Ascending aorta (tissue), 2 donors: ENCODE measurements at regions of chr10 and their contacts with region 1.

Region 1: GRCh38 chr10:86710987-86711512 is 42.7 kb downstream of the LDB3 start:
- DNase-seq: peak; percentile 58 to 94
- H3K4me3 ChIP-seq: peak overlapping the region; percentile 83 to 89
- H3K27ac ChIP-seq: peak overlapping the region; percentile 98
- H3K4me1 ChIP-seq: peaks cover 2 to 8% of the 10 kb centered on the region in 2 donors
- H3K27me3 ChIP-seq: no peaks in the 10 kb centered on the region
- CTCF ChIP-seq: peak; percentile 79 to 98 (median 89)

Region 2: GRCh38 chr10:86661161-86662025 is 49.7 kb before region 1 on chr10:
- intact Hi-C with region 1: no loop called
- DNase-seq: no peak
- H3K4me3 ChIP-seq: no peak overlapping the region
- H3K27ac ChIP-seq: no peak overlapping the region
- H3K4me1 ChIP-seq: peaks cover 0 to 3% of the 10 kb centered on the region in 2 donors
- H3K27me3 ChIP-seq: no peaks in the 10 kb centered on the region
- CTCF ChIP-seq: no peak

Region 3: DNA sequence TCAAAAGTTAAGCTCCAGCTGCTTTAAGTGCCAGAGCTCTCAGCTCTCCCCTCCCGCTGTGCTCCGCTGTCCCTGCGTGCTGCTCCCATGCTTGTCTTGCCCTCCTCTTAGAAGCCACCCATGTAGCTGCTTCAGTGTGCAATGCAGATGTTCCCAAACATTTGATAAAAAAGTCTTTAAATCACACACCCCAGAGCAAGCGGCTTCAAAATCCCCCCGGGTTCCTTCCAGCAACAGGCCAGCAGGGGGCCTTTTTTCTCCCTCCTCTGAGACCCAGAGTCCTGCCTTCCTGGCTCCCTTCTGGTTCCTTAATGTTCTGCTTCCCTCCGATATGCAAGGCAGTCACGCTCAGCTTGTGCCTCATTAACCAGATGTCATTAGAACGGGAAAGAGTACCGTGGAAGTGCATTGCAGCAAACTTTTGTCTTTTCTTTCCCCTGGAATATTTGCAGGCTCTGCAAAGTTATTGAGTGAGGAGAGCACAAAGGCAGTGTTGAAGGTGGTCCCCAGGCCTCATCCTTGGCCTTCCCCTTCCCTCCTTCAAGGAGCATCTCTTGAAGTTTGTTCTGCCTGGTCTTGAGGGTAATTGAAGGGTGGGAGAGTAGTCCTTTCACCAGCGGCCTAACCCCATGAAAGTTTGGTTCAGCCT is 17.2 kb before region 1 on chr10:
- intact Hi-C with region 1: loop called (anchors 2 kb)
- DNase-seq: no peak
- H3K4me3 ChIP-seq: no peak overlapping the region
- H3K27ac ChIP-seq: peak overlapping the region in 1 of 2 donors; percentile 36
- H3K4me1 ChIP-seq: peaks cover 7 to 15% of the 10 kb centered on the region in 2 donors
- H3K27me3 ChIP-seq: no peaks in the 10 kb centered on the region
- CTCF ChIP-seq: peak; percentile 35 to 54 (median 51)

Region 4: GRCh38 chr10:86899670-86900276 is 188.7 kb after region 1 on chr10:
- intact Hi-C with region 1: loop called (anchors 1 kb)
- DNase-seq: peak in 1 of 2 donors; percentile 81
- H3K4me3 ChIP-seq: no peak overlapping the region
- H3K27ac ChIP-seq: peak overlapping the region in 1 of 2 donors; percentile 15
- H3K4me1 ChIP-seq: peaks cover 0 to 17% of the 10 kb centered on the region in 2 donors
- H3K27me3 ChIP-seq: no peaks in the 10 kb centered on the region
- CTCF ChIP-seq: peak; percentile 64 to 73 (median 69)

Region 5: DNA sequence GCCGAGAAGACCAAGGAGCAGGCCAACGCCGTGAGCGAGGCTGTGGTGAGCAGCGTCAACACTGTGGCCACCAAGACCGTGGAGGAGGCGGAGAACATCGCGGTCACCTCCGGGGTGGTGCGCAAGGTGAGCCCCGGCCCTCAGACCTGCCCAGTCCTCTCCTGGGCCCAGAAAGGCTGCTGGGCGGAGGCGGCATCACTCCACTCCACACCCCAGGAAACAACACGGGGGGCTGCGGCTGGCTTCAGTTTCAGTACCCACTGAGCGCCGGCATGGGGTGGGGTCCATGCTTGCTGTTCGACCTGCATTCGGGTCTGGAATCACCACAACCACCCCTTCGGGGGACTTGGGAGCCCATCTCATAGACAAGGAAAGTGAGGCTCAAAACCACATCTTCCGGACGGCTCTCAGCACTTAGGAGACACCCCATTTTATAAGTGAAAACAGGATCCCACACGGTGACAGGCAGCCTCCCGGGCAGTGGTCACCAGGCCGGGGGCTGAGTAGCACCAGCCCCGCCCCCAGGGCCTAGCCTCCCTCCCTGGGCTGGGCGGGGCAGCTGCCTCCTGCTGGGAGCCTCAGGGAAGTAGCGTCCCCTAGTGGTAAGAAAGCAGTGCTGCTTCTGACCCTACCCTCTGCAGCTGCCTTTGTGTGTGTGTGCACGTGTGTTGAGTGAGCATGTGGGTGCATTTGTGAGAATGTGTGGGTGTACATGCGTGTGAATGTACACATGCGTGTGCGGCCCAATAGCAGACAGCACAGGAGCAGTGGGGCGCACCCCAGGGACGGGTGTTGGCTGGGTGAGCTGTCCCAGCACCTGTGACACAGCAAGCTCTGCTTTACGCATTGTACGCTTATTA is 249.2 kb after region 1 on chr10:
- intact Hi-C with region 1: loop called (anchors 5 kb)
- DNase-seq: peak in 1 of 2 donors; percentile 83
- H3K4me3 ChIP-seq: peak overlapping the region in 1 of 2 donors; percentile 42
- H3K27ac ChIP-seq: peak overlapping the region; percentile 95 to 98
- H3K4me1 ChIP-seq: peaks cover 40 to 59% of the 10 kb centered on the region in 2 donors
- H3K27me3 ChIP-seq: no peaks in the 10 kb centered on the region
- CTCF ChIP-seq: peak; percentile 91 to 97 (median 97)